ENCODE measurements at regions of chr18 and their contacts with region 1.

Region 1: DNA sequence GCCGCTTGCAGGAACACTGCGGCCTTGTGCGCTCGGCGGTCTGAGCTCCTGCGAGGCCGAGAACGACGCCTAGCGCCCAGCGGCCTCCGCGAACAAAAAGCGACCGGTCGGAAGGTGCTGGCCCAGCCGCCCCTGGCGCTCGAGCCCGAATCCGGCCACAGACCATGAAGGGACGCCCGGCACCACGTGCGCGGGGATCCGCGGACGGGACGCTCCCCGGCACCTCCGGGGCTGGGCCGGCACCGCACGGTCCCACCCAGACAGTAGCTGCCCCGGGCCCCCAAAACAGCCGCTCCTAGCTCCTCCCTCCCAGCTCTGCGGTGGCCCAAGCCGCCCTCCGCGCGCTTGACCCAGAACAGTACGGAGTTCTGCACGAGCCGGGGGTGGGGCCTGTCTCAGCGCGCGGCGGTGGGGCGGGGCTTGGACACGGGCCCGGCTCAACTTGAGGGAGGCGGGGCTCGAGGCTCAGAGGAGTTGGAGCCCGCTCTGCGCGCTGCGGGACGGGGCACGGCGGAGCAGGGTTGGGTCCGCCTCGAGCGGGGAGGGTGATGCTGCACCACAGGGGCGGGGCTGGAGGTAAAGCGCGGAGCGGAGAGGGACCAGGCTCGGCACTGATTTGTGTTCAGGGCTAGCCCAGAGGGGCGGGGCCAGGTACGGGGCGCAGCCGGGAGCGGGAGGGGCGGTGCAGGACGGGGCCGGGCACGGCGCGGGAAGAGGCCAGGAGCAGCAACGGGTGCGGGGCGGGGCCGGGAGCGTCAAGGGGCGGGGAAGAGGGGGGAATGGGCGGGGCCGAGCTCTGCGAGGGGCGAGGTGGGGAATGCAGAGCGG is 538 bp upstream of the IMPA2 start:
- DNase-seq: peak; percentile 99
- ATAC-seq: peak; percentile 88
- H3K4me3 ChIP-seq: peak overlapping the region; percentile 73
- H3K27ac ChIP-seq: peak overlapping the region; percentile 81
- H3K4me1 ChIP-seq: peaks cover 33% of the 10 kb centered on the region
- H3K27me3 ChIP-seq: no peaks in the 10 kb centered on the region
- CTCF ChIP-seq: 0 out of 2 replicates have a peak, but pooled peaks have one; percentile 24

Region 2: DNA sequence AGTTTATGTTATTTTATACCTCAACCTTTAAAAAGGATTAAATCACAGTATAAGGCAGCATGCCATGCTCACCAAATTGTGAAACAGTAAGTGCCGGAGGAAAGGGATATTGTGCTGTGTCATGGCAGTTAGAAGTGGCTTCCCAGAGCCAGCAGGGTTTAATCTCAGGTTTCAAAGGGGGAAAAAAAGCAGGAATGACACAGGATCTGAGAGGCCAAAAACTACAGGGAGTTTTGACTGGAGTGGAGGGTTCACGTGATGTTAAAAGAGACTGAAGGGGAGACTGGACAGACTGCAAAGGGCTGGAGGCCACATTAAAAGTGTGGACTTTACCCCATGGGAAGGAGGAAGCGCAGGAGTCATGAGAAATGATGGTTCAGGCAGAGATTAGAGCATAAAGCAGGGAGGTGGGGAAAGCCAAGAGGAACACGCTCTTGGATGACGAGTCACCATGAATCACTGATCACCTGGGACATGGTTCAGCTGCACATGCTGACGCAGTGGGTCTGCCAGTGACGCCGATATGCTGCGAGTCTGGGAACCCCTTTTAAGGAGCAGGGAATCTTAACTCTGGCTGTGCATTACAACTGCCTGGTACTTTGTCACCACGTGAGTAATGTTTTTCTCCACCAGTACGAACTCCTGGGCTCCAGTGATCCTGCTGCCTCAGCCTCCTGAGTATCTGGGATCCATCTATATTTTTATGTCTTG is 123.4 kb before region 1 on chr18:
- CTCF ChIA-PET with region 1: no interaction called
- POLR2A ChIA-PET with region 1: interaction called, 3 read pairs
- intact Hi-C with region 1: loop called (anchors 2 kb)
- DNase-seq: peak; percentile 99
- ATAC-seq: peak; percentile 71
- H3K4me3 ChIP-seq: peak overlapping the region; percentile 7; the same call in 1 of the 2 replicates
- H3K27ac ChIP-seq: peak overlapping the region; percentile 96
- H3K4me1 ChIP-seq: peaks cover 55% of the 10 kb centered on the region
- H3K27me3 ChIP-seq: no peaks in the 10 kb centered on the region
- CTCF ChIP-seq: no peak

Region 3: GRCh38 chr18:11937874-11938478 is 42.8 kb before region 1 on chr18:
- CTCF ChIA-PET with region 1: no interaction called
- POLR2A ChIA-PET with region 1: interaction called, 10 read pairs
- intact Hi-C with region 1: loop called (anchors 1 kb)
- DNase-seq: peak; percentile 87
- ATAC-seq: peak; percentile 84
- H3K4me3 ChIP-seq: no peak overlapping the region
- H3K27ac ChIP-seq: no peak overlapping the region
- H3K4me1 ChIP-seq: no peaks in the 10 kb centered on the region
- H3K27me3 ChIP-seq: no peaks in the 10 kb centered on the region
- CTCF ChIP-seq: peak; percentile 91

Region 4: GRCh38 chr18:11955239-11956029 is 25.3 kb before region 1 on chr18:
- CTCF ChIA-PET with region 1: interaction called, 16 read pairs
- POLR2A ChIA-PET with region 1: interaction called, 22 read pairs
- intact Hi-C with region 1: loop called (anchors 1 kb)
- DNase-seq: peak; percentile 93
- ATAC-seq: peak; percentile 77
- H3K4me3 ChIP-seq: peak overlapping the region; percentile 28; the same call in 1 of the 2 replicates
- H3K27ac ChIP-seq: peak overlapping the region; percentile 91
- H3K4me1 ChIP-seq: peaks cover 21% of the 10 kb centered on the region
- H3K27me3 ChIP-seq: no peaks in the 10 kb centered on the region
- CTCF ChIP-seq: no peak

Region 5: DNA sequence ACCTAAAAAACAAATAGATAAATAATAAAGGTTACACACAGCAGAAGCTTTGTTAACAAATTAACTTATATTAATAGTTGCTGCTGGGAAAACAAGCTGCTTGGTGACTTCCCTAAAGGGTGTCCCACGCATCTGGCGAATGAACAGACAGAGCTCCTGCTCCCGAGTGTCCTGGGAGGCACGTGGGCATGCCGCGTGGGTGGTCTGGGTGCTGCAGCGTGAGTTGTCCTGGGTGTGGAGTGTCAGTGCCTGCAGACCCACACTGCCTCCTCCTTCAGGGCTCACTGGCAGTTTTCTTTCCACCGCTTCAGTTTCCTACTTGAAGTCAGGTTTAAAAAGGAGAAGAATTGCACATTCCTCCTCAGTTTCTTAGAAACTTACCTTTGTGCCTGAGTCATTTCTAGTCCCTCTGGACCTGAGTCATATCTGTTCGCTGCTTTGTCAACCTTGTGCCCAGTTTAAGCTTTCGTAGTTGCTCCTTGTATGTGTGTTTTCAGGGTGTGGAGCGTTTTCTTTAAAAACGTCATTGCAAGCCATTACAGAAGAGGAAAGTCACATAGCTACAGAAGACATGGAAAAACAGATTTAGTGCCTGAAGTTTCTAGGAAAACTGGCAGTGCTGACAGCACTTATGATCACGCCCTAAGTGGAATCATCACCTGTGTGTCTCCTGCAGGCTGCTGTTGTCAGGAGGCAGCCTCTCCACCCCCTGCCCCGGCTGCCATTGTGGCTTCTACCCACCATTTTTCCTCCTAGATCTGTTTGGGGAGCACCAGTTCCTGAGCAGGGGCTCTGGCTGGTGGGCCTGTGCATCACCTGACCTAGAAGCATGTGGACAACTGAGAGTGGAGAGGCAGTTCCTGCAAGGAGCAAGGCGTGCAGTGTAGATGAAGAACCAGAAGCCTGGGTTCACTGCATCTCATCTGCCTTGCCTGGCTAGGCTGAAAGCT is 25.0 kb after region 1 on chr18:
- CTCF ChIA-PET with region 1: interaction called, 15 read pairs
- POLR2A ChIA-PET with region 1: interaction called, 20 read pairs
- intact Hi-C with region 1: loop called (anchors 1 kb)
- DNase-seq: peak; percentile 94
- ATAC-seq: peak; percentile 84
- H3K4me3 ChIP-seq: peak overlapping the region; percentile 54
- H3K27ac ChIP-seq: peak overlapping the region; percentile 99
- H3K4me1 ChIP-seq: peaks cover 34% of the 10 kb centered on the region
- H3K27me3 ChIP-seq: no peaks in the 10 kb centered on the region
- CTCF ChIP-seq: no peak

Region 6: DNA sequence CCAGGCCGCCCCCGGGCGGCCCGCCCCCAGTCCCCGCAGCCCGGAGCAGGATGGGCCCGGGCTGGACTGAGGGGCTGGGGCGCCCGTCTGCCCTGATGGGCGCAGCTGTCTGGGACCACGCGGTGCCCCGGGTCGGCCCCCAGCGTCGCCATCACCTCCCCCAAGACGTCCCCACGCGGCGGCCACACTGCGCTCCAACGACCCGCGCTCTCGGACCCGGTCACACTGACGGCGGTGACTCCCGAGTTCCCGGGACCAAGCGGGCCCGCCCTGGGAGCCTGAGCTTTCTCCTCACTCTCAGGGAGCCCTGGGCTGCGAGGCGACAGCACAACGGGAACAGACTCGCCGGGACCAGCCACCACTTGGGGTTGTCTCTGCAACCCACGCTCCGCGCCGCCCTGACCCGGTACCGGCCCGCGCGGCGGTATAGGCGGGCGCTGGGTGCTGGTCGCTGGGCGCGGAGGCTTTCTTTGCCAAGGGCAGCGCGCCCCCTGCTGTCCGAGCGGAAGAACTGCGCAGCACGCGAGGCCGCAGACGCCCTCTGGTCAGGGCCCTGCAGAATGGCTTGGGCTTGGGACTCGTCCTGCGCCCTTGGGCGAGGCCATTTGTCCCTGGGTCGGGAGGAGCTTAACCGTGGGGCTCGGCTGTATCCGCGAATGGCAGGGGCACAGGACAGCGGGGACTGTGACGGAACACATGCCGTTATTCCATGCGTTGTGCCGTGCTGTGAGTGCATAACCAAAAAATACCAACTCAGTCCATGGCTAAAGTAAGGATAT is 58.1 kb after region 1 on chr18:
- CTCF ChIA-PET with region 1: interaction called, 10 read pairs
- POLR2A ChIA-PET with region 1: no interaction called
- intact Hi-C with region 1: no loop called
- DNase-seq: peak; percentile 83
- ATAC-seq: peak; percentile 93
- H3K4me3 ChIP-seq: peak overlapping the region; percentile 74
- H3K27ac ChIP-seq: no peak overlapping the region
- H3K4me1 ChIP-seq: peaks cover 13% of the 10 kb centered on the region; the same call in 1 of the 2 replicates
- H3K27me3 ChIP-seq: no peaks in the 10 kb centered on the region
- CTCF ChIP-seq: peak; percentile 94

Region 7: DNA sequence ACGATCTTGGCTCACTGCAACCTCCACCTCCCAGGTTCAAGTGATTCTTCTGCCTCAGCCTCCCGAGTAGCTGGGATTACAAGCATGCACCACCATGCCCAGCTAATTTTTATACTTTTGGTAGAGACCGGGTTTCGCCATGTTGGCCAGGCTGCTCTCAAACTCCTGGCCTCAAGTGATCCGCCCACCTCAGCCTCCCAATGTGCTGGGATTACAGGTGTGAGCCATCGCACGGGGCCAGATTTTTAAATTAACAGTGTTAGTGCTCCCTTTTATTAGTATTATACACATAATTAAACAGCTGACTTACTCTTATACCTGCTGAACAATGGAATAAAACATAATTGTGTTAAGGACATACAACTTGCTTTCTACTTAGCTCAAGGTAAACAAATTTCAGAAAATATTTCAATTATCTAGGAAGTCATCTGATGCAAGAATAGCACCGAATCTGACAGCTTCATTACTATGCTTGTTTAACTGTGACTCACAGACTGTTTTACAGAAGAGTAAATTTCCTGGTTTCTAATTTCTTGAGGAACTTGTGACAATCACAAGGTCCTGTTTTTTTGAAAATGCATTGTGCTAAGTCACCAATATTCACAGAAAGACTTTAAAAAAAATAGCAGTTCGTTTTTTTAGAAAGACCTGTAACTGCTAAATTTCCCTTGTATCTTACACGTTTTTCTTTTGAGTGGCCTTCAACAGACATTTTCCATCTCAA is 626.0 kb after region 1 on chr18:
- CTCF ChIA-PET with region 1: no interaction called
- POLR2A ChIA-PET with region 1: interaction called, 21 read pairs
- intact Hi-C with region 1: no loop called
- DNase-seq: peak; percentile 83
- ATAC-seq: peak; percentile 79
- H3K4me3 ChIP-seq: peak overlapping the region; percentile 46; the same call in 1 of the 2 replicates
- H3K27ac ChIP-seq: peak overlapping the region; percentile 95
- H3K4me1 ChIP-seq: peaks cover 47% of the 10 kb centered on the region
- H3K27me3 ChIP-seq: no peaks in the 10 kb centered on the region
- CTCF ChIP-seq: no peak